CD8-positive, alpha-beta T cell (primary cell): ENCODE measurements at regions of chr18 and their contacts with region 1.

Region 1: DNA sequence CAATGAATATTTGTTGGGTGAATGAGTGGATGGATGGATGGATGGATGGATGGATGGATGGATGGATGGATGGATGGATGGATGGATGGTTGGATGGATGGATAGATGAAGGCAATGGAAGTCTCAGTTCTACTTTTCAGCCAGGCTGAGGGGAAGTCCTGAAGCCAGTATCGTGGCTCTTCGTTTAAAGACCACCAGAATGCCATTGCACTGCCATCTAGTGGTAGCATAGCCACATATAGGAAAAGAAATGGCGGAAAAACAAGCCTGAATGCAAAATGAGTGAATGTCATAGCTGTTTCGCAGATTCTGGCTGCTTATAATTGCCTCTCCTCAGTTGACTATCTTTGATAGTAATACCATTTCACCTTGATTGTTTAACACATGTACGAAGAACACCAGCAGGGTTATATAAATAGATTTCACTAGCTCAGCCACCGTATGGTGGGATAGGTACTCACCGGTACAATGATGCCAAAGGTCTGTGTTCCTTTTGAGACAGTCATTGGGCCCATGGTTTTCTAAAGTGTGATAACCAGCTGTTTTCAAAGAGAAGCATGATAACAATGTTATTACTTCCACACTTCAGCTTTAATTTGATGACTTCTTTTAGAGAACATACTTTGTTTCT is 62.3 kb upstream of the GREB1L start:
- DNase-seq: peak in 8 of 9 experiments; percentile 20 to 71 (median 44)
- ATAC-seq: peak; percentile 56
- H3K4me3 ChIP-seq: no peak overlapping the region
- H3K4me3 Mint-ChIP-seq: no peak overlapping the region
- H3K27ac ChIP-seq: no peak overlapping the region
- H3K27ac Mint-ChIP-seq: no peak overlapping the region
- H3K4me1 ChIP-seq: no peaks in the 10 kb centered on the region
- H3K4me1 Mint-ChIP-seq: no peaks in the 10 kb centered on the region
- H3K27me3 ChIP-seq: no peaks in the 10 kb centered on the region
- H3K27me3 Mint-ChIP-seq: no peaks in the 10 kb centered on the region
- CTCF ChIP-seq: peak; percentile 71

Region 2: GRCh38 chr18:20971886-20972267 is 207.8 kb before region 1 on chr18:
- CTCF ChIA-PET with region 1: interaction called, 3 read pairs
- POLR2A ChIA-PET with region 1: no interaction called
- intact Hi-C with region 1: loop called (anchors 2 to 5 kb)
- DNase-seq: peak in 2 of 9 experiments; percentile 22 to 39
- ATAC-seq: peak; percentile 63
- H3K4me3 ChIP-seq: no peak overlapping the region
- H3K4me3 Mint-ChIP-seq: no peak overlapping the region
- H3K27ac ChIP-seq: no peak overlapping the region
- H3K27ac Mint-ChIP-seq: no peak overlapping the region
- H3K4me1 ChIP-seq: no peaks in the 10 kb centered on the region
- H3K4me1 Mint-ChIP-seq: peaks cover 3% of the 10 kb centered on the region
- H3K27me3 ChIP-seq: no peaks in the 10 kb centered on the region
- H3K27me3 Mint-ChIP-seq: no peaks in the 10 kb centered on the region
- CTCF ChIP-seq: peak; percentile 64

Region 3: GRCh38 chr18:20996418-20996817 is 183.3 kb before region 1 on chr18:
- CTCF ChIA-PET with region 1: no interaction called
- POLR2A ChIA-PET with region 1: no interaction called
- intact Hi-C with region 1: loop called in 1 of 2 experiments (anchors 5 kb)
- DNase-seq: no peak
- ATAC-seq: no peak
- H3K4me3 ChIP-seq: no peak overlapping the region
- H3K4me3 Mint-ChIP-seq: no peak overlapping the region
- H3K27ac ChIP-seq: no peak overlapping the region
- H3K27ac Mint-ChIP-seq: no peak overlapping the region
- H3K4me1 ChIP-seq: no peaks in the 10 kb centered on the region
- H3K4me1 Mint-ChIP-seq: peaks cover 33% of the 10 kb centered on the region
- H3K27me3 ChIP-seq: no peaks in the 10 kb centered on the region
- H3K27me3 Mint-ChIP-seq: no peaks in the 10 kb centered on the region
- CTCF ChIP-seq: no peak

Region 4: DNA sequence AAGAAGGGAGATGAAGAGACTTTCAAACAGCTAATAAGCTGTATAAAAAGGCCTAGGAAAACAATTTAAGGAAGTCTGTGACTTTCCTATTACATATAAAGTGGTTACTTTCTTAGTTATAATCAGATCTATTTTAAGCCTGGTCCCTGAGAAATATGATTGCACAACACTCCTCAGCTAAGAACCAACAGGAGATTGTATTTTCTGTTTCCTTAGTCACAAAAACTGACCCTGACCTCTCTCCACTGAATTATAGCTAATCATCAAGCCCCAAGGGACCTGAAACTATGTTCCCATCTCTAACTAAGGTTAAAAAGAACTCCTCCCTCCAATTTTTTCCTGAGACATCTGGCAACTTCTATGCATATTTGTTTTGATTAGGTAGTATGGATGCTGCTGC is 175.0 kb before region 1 on chr18:
- CTCF ChIA-PET with region 1: interaction called, 3 read pairs
- POLR2A ChIA-PET with region 1: no interaction called
- intact Hi-C with region 1: loop called (anchors 1 to 5 kb)
- DNase-seq: no peak
- ATAC-seq: no peak
- H3K4me3 ChIP-seq: no peak overlapping the region
- H3K4me3 Mint-ChIP-seq: no peak overlapping the region
- H3K27ac ChIP-seq: no peak overlapping the region
- H3K27ac Mint-ChIP-seq: peak overlapping the region; percentile 37
- H3K4me1 ChIP-seq: no peaks in the 10 kb centered on the region
- H3K4me1 Mint-ChIP-seq: peaks cover 13% of the 10 kb centered on the region
- H3K27me3 ChIP-seq: no peaks in the 10 kb centered on the region
- H3K27me3 Mint-ChIP-seq: no peaks in the 10 kb centered on the region
- CTCF ChIP-seq: no peak

Region 5: DNA sequence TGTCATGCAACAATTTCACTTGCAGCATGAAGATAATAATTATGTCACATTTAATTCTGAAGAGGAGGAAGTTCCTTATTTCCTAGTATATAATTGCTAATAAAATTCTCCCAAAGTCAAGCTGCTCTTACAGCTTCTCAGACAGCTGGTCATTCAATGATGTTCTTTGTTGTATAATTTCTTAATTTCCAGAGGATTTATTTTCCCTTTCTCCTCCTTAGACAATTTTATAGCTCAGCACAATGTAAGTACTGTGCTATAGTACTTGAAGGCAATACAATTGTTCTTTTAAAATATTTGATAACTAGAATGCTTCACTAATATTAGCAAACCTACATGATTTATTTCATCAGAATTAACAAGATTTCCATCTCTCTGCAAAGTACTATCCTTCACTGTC is 141.5 kb before region 1 on chr18:
- CTCF ChIA-PET with region 1: no interaction called
- POLR2A ChIA-PET with region 1: no interaction called
- intact Hi-C with region 1: loop called in 1 of 2 experiments (anchors 5 kb)
- DNase-seq: no peak
- ATAC-seq: no peak
- H3K4me3 ChIP-seq: no peak overlapping the region
- H3K4me3 Mint-ChIP-seq: no peak overlapping the region
- H3K27ac ChIP-seq: no peak overlapping the region
- H3K27ac Mint-ChIP-seq: peak overlapping the region; percentile 14
- H3K4me1 ChIP-seq: no peaks in the 10 kb centered on the region
- H3K4me1 Mint-ChIP-seq: peaks cover 13% of the 10 kb centered on the region
- H3K27me3 ChIP-seq: no peaks in the 10 kb centered on the region
- H3K27me3 Mint-ChIP-seq: no peaks in the 10 kb centered on the region
- CTCF ChIP-seq: no peak

Region 6: DNA sequence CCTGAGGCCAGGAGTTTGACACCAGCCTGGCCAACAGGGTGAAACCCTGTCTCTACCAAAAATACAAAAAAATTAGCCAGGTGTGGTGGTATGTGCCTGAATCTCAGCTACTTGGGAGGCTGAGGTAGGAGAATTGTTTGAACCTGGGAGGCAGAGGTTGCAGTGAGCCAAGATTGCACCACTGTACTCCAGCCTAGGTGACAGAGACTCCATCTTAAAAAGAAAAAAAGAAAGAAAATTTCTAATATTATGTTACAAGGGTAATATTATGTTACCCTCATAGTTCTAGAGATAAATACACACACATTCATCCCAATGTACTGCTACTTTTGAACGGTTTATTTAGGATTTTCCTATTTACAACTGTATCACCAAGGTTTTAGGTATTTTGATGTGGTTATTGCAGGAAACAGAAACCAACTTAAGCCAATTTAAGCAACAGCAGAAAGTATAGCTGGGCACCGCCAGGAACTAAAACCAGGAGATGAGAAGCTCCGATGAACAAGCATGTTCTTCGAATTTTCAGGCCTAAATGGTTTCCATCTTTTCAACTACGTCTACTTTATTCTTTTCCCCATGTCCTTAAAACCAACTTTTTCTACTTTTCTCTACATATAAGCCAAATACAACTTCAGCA is 56.3 kb before region 1 on chr18:
- CTCF ChIA-PET with region 1: no interaction called
- POLR2A ChIA-PET with region 1: no interaction called
- intact Hi-C with region 1: loop called in 1 of 2 experiments (anchors 5 kb)
- DNase-seq: peak in 1 of 9 experiments; percentile 20
- ATAC-seq: no peak
- H3K4me3 ChIP-seq: no peak overlapping the region
- H3K4me3 Mint-ChIP-seq: peak overlapping the region; percentile 27
- H3K27ac ChIP-seq: no peak overlapping the region
- H3K27ac Mint-ChIP-seq: peak overlapping the region; percentile 19
- H3K4me1 ChIP-seq: peaks cover 5% of the 10 kb centered on the region
- H3K4me1 Mint-ChIP-seq: peaks cover 7% of the 10 kb centered on the region
- H3K27me3 ChIP-seq: no peaks in the 10 kb centered on the region
- H3K27me3 Mint-ChIP-seq: peaks cover 4% of the 10 kb centered on the region
- CTCF ChIP-seq: no peak

Region 7: DNA sequence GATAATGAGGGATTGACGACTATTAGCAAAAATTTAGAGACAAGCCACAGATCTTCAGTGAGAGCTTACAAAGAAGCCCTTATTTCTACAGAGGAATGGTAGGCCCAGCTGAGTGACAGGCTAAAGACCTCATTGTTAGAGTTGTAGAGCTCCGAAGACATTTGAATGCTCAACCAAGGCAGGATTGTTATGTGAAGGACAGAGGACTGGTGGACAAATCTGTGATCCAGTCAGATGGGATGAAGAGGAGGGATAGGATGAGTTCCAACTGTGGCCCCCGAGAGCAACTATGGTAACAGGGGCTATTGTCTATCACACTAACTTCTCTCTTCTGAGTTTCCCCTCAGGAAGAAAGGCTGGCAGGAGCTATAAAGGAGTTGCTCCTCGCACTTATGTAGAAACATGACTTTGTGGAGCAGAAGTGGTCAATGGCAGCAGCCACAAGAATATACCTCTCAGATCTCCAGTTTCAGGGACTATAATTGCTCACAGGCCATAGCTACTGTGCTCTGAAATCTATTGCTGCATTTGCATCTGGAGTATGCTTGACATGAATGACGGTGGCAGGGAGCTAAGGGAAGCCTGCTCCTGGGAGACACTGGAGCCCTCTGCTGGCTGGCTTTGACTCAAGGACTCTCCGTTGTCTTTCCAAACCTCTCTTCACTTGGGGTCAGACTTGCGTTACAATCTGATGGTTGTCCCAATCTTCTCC is 12.0 kb after region 1 on chr18:
- CTCF ChIA-PET with region 1: interaction called, 26 read pairs
- POLR2A ChIA-PET with region 1: no interaction called
- intact Hi-C with region 1: no loop called
- DNase-seq: peak in 1 of 9 experiments; percentile 3
- ATAC-seq: no peak
- H3K4me3 ChIP-seq: no peak overlapping the region
- H3K4me3 Mint-ChIP-seq: no peak overlapping the region
- H3K27ac ChIP-seq: no peak overlapping the region
- H3K27ac Mint-ChIP-seq: no peak overlapping the region
- H3K4me1 ChIP-seq: no peaks in the 10 kb centered on the region
- H3K4me1 Mint-ChIP-seq: no peaks in the 10 kb centered on the region
- H3K27me3 ChIP-seq: no peaks in the 10 kb centered on the region
- H3K27me3 Mint-ChIP-seq: peaks cover 30% of the 10 kb centered on the region
- CTCF ChIP-seq: no peak